Heart left ventricle (tissue), 16 donors: ENCODE measurements at regions of chr15 and their contacts with region 1.

Region 1: GRCh38 chr15:39580117-39580484 is 778 bp upstream of the THBS1 start:
- DNase-seq: peak; percentile 91 to 96 (median 92)
- ATAC-seq: peak; percentile 66 to 83 (median 83)
- H3K4me3 ChIP-seq: peak overlapping the region; percentile 35 to 78 (median 64)
- H3K27ac ChIP-seq: peak overlapping the region; percentile 61 to 97 (median 88)
- H3K4me1 ChIP-seq: peaks cover 0 to 52% (median 25%) of the 10 kb centered on the region in 12 donors
- H3K27me3 ChIP-seq: peaks cover 0 to 4% (median 0%) of the 10 kb centered on the region in 9 donors
- CTCF ChIP-seq: peak; percentile 95 to 99 (median 97)
- POLR2A ChIP-seq: no peak

Region 2: GRCh38 chr15:38707802-38708671 is 872.1 kb before region 1 on chr15:
- intact Hi-C with region 1: loop called in 6 of 10 experiments (anchors 5 to 10 kb)
- DNase-seq: no peak
- ATAC-seq: peak in 3 of 4 donors; percentile 77 to 90 (median 85)
- H3K4me3 ChIP-seq: no peak overlapping the region
- H3K27ac ChIP-seq: no peak overlapping the region
- H3K4me1 ChIP-seq: peaks cover 0 to 3% (median 0%) of the 10 kb centered on the region in 12 donors
- H3K27me3 ChIP-seq: peaks cover 0 to 16% (median 0%) of the 10 kb centered on the region in 9 donors
- CTCF ChIP-seq: peak; percentile 45 to 76 (median 64)
- POLR2A ChIP-seq: no peak

Region 3: GRCh38 chr15:38991126-38991525 is 589.0 kb before region 1 on chr15:
- intact Hi-C with region 1: loop called in 1 of 10 experiments (anchors 5 kb)
- DNase-seq: no peak
- ATAC-seq: peak in 1 of 4 donors; percentile 35
- H3K4me3 ChIP-seq: no peak overlapping the region
- H3K27ac ChIP-seq: peak overlapping the region in 6 of 12 donors; percentile 8 to 62 (median 25)
- H3K4me1 ChIP-seq: peaks cover 0 to 31% (median 12%) of the 10 kb centered on the region in 12 donors
- H3K27me3 ChIP-seq: no peaks in the 10 kb centered on the region
- CTCF ChIP-seq: peak in 11 of 12 donors; percentile 20 to 61 (median 46)
- POLR2A ChIP-seq: no peak

Region 4: GRCh38 chr15:39312984-39313383 is 267.1 kb before region 1 on chr15:
- intact Hi-C with region 1: loop called in 8 of 10 experiments (anchors 1 to 10 kb)
- DNase-seq: peak in 2 of 5 donors; percentile 21 to 32
- ATAC-seq: peak in 3 of 4 donors; percentile 85 to 90 (median 86)
- H3K4me3 ChIP-seq: no peak overlapping the region
- H3K27ac ChIP-seq: no peak overlapping the region
- H3K4me1 ChIP-seq: peaks cover 0 to 7% (median 0%) of the 10 kb centered on the region in 12 donors
- H3K27me3 ChIP-seq: no peaks in the 10 kb centered on the region
- CTCF ChIP-seq: peak in 11 of 12 donors; percentile 8 to 54 (median 39)
- POLR2A ChIP-seq: no peak

Region 5: GRCh38 chr15:39391230-39391629 is 188.9 kb before region 1 on chr15:
- intact Hi-C with region 1: no loop called
- DNase-seq: peak in 2 of 5 donors; percentile 25 to 77
- ATAC-seq: peak in 2 of 4 donors; percentile 54 to 80
- H3K4me3 ChIP-seq: no peak overlapping the region
- H3K27ac ChIP-seq: no peak overlapping the region
- H3K4me1 ChIP-seq: peaks cover 0 to 32% (median 0%) of the 10 kb centered on the region in 12 donors
- H3K27me3 ChIP-seq: no peaks in the 10 kb centered on the region
- CTCF ChIP-seq: no peak
- POLR2A ChIP-seq: no peak

Region 6: DNA sequence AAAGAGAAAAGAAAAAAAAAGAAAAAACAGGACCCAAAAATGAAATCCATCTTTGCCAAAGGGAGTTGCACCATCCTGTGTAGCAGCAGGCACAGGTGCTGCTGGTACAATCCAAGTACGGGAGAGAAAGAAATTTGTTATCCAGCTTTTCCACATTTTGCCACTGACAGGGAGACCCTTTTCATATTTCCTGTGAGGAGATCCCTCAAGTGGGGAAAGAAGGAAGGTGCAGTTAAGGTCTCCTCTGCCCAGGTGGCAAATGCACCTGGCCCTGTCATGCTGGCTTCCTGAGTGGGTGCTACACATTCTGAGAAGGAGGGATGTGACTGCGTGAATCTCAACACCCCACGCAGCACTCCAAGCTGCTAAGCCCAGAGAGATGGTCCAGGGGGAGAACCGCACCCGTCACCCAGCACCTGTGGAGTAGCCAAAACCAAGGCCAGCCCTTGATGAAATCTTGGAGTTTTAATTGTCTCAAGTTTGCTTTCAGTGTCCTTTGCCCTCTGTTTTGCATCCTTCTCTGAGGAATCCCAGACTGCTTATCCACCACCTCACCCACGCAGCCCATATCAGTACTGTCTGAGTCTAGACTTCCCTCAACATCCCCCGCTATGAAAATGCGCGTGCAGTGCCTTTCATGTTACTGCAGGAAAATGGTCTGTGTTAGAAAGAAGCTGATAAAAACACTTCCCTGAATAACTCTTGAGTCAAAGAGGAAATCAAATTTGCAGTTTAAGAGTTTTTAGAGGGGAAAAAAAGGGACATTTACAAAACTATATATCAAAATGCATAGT is 141.1 kb before region 1 on chr15:
- intact Hi-C with region 1: loop called in 3 of 10 experiments (anchors 5 to 10 kb)
- DNase-seq: peak in 1 of 5 donors; percentile 40
- ATAC-seq: peak in 3 of 4 donors; percentile 34 to 43 (median 35)
- H3K4me3 ChIP-seq: no peak overlapping the region
- H3K27ac ChIP-seq: peak overlapping the region in 11 of 12 donors; percentile 31 to 83 (median 62)
- H3K4me1 ChIP-seq: peaks cover 2 to 41% (median 25%) of the 10 kb centered on the region in 12 donors
- H3K27me3 ChIP-seq: no peaks in the 10 kb centered on the region
- CTCF ChIP-seq: no peak
- POLR2A ChIP-seq: no peak

Region 7: GRCh38 chr15:39539466-39539865 is 40.6 kb before region 1 on chr15:
- intact Hi-C with region 1: no loop called
- DNase-seq: no peak
- ATAC-seq: no peak
- H3K4me3 ChIP-seq: no peak overlapping the region
- H3K27ac ChIP-seq: peak overlapping the region in 1 of 12 donors; percentile 56
- H3K4me1 ChIP-seq: peaks cover 0 to 9% (median 0%) of the 10 kb centered on the region in 12 donors
- H3K27me3 ChIP-seq: no peaks in the 10 kb centered on the region
- CTCF ChIP-seq: no peak
- POLR2A ChIP-seq: no peak

Region 8: DNA sequence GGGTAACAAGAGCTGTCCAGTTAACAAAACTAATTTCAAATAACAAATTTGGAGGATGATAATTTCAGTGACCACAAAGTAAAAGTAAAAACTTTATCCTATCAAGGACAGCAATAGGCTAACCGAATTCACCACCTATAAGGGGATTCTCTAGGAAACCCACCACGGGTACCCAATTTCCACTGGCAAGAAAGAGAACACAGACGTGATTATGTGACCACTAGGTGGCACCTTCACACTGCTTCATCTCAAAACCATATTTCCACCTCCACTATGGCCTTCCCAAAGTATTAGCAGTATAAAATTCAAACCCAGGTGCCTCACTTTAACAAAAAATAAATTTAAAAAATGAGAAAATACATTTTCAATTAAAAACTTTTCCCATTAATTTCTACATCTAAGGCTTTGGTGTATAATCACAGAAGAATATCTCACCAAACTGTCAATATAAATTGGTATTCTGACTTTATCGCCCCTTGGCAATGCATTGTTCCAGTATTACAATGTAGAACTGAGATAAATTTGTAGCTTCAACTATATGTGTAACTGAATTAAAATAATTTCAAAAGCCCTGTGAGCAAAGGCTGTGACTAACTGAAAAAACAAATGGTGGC is 106.0 kb after region 1 on chr15:
- intact Hi-C with region 1: loop called in 1 of 10 experiments (anchors 10 kb)
- DNase-seq: peak in 2 of 5 donors; percentile 21 to 31
- ATAC-seq: peak in 3 of 4 donors; percentile 48 to 76 (median 64)
- H3K4me3 ChIP-seq: no peak overlapping the region
- H3K27ac ChIP-seq: no peak overlapping the region
- H3K4me1 ChIP-seq: peaks cover 0 to 6% (median 0%) of the 10 kb centered on the region in 12 donors
- H3K27me3 ChIP-seq: no peaks in the 10 kb centered on the region
- CTCF ChIP-seq: peak; percentile 69 to 86 (median 76)
- POLR2A ChIP-seq: no peak